ENCODE measurements at regions of chr11 and their contacts with region 1.

Region 1: GRCh38 chr11:128522055-128522942 is 65.1 kb downstream of the ETS1 start:
- DNase-seq: peak; percentile 69 to 91 (median 85)
- ATAC-seq: peak; percentile 59 to 65
- H3K4me3 Mint-ChIP-seq: peak overlapping the region; percentile 89 to 99 (median 98)
- H3K27ac Mint-ChIP-seq: peak overlapping the region; percentile 93 to 100 (median 96)
- H3K4me1 Mint-ChIP-seq: peaks cover 30 to 65% (median 50%) of the 10 kb centered on the region in 4 donors
- H3K27me3 Mint-ChIP-seq: no peaks in the 10 kb centered on the region

Region 2: GRCh38 chr11:128323381-128323780 is 198.9 kb before region 1 on chr11:
- POLR2A ChIA-PET with region 1: interaction called, 13 read pairs
- DNase-seq: peak in 6 of 10 donors; percentile 17 to 69 (median 52)
- ATAC-seq: no peak
- H3K4me3 Mint-ChIP-seq: peak overlapping the region; percentile 6 to 83 (median 76)
- H3K27ac Mint-ChIP-seq: peak overlapping the region; percentile 93 to 99 (median 98)
- H3K4me1 Mint-ChIP-seq: peaks cover 52 to 92% (median 86%) of the 10 kb centered on the region in 4 donors
- H3K27me3 Mint-ChIP-seq: no peaks in the 10 kb centered on the region

Region 3: GRCh38 chr11:128482512-128483191 is 39.6 kb before region 1 on chr11:
- POLR2A ChIA-PET with region 1: interaction called, 603 read pairs
- DNase-seq: peak in 8 of 10 donors; percentile 70 to 85 (median 78)
- ATAC-seq: peak; percentile 65 to 82
- H3K4me3 Mint-ChIP-seq: peak overlapping the region; percentile 73 to 89 (median 82)
- H3K27ac Mint-ChIP-seq: peak overlapping the region; percentile 93 to 99 (median 98)
- H3K4me1 Mint-ChIP-seq: peaks cover 53 to 95% (median 95%) of the 10 kb centered on the region in 4 donors
- H3K27me3 Mint-ChIP-seq: no peaks in the 10 kb centered on the region

Region 4: GRCh38 chr11:128548655-128549255 is 26.5 kb after region 1 on chr11:
- POLR2A ChIA-PET with region 1: interaction called, 161 read pairs
- DNase-seq: peak in 5 of 10 donors; percentile 14 to 49 (median 40)
- ATAC-seq: peak; percentile 26 to 32
- H3K4me3 Mint-ChIP-seq: peak overlapping the region; percentile 81 to 93 (median 88)
- H3K27ac Mint-ChIP-seq: peak overlapping the region; percentile 92 to 100 (median 95)
- H3K4me1 Mint-ChIP-seq: peaks cover 57 to 95% (median 92%) of the 10 kb centered on the region in 4 donors
- H3K27me3 Mint-ChIP-seq: no peaks in the 10 kb centered on the region

Region 5: GRCh38 chr11:128568166-128568778 is 46.0 kb after region 1 on chr11:
- POLR2A ChIA-PET with region 1: no interaction called
- DNase-seq: no peak
- ATAC-seq: peak; percentile 52 to 57
- H3K4me3 Mint-ChIP-seq: peak overlapping the region in 2 of 10 donors; percentile 7 to 36
- H3K27ac Mint-ChIP-seq: peak overlapping the region in 7 of 10 donors; percentile 0 to 79 (median 38)
- H3K4me1 Mint-ChIP-seq: peaks cover 17 to 57% (median 29%) of the 10 kb centered on the region in 4 donors
- H3K27me3 Mint-ChIP-seq: no peaks in the 10 kb centered on the region

Region 6: DNA sequence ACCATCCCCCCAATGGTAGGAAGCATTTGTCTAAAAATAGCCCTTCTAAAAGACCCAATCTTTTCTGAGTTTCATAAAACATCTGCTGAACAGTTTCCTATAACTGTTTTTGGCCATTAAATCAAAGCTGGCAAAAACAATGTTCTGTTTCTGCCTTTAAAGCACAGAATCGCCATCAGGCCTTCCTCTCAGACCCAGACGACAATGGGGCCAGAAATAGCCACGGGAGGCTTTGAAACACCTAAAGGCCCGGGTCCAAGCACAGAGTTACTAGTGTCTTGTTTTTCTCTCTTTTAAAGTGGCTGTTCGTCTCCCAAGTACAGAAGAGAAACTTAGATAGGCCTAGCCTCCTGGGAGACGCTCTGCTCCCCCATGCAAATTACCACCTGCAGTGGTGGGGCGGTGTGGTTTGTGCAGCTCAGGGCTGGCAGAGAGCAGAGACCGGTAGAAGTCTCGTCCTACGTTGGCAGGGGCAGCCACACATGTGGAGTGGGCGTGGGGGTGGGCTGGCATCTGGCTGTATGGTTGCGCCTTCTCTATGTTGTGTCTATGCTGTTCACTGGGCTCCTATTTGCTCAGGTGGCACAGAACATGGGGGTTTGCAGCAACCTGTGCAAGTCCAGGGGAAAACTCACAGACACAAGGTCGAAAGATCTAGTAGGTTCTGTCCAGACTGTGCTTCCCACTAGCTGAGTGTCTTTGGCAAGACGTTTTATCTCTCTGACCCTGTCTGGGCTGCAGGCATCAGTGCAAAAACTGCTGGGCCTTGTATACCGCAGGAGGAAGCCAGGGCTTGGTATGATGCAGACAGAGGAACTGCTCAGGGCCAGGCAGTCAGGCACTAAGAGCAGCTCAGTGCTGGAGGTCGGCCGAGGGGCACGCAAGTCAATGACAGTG is 88.7 kb after region 1 on chr11:
- POLR2A ChIA-PET with region 1: interaction called, 476 read pairs
- DNase-seq: peak; percentile 48 to 90 (median 77)
- ATAC-seq: peak; percentile 89 to 93
- H3K4me3 Mint-ChIP-seq: peak overlapping the region; percentile 59 to 85 (median 72)
- H3K27ac Mint-ChIP-seq: peak overlapping the region; percentile 94 to 99 (median 97)
- H3K4me1 Mint-ChIP-seq: peaks cover 49 to 92% (median 82%) of the 10 kb centered on the region in 4 donors
- H3K27me3 Mint-ChIP-seq: peaks cover 0 to 1% (median 0%) of the 10 kb centered on the region in 5 donors